ENCODE measurements at regions of chr1 and their contacts with region 1.

Region 1: DNA sequence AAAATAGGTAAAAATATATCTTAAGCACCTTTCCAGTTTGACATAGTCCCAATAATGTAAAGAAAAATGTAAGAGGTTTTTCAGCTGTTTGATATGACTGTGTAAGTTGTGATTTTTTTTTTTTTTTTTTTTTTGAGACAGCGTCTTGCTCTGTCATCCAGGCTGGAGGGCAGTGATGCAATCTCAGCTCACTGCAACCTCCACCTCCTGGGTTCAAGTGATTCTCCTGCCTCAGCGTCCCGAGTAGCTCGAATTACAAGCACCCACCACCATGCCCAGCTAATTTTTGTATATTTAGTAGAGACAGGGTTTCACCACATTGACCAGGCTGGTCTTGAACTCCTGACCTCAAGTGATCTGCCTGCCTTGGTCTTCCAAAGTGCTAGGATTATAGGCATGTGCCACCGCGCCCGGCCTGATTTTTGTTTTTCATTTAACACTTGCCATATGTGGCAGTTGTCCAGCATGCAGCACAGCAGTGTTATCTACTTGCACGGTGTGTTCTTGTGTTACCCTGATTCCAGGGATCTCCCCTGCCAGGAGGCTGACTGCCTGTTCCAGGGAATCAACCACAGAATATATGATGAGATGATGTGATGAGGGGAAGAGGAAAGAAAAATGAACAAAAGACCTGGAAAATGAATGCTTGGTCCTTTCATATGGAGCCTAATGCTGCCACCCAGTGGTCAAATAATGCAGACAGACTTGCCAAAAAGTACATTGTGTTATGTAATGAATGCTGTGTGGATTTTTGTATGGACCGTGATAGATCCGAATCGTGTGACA is 79.0 kb downstream of the RAVER2 start:
- DNase-seq: peak; percentile 47 to 60
- H3K4me3 ChIP-seq: no peak overlapping the region
- H3K27ac ChIP-seq: no peak overlapping the region
- H3K4me1 ChIP-seq: no peaks in the 10 kb centered on the region
- H3K27me3 ChIP-seq: no peaks in the 10 kb centered on the region
- CTCF ChIP-seq: peak; percentile 91

Region 2: GRCh38 chr1:63615768-63616420 is 1208.0 kb before region 1 on chr1:
- CTCF ChIA-PET with region 1: no interaction called
- POLR2A ChIA-PET with region 1: no interaction called
- intact Hi-C with region 1: loop called (anchors 5 kb)
- DNase-seq: peak; percentile 61 to 63
- H3K4me3 ChIP-seq: no peak overlapping the region
- H3K27ac ChIP-seq: no peak overlapping the region
- H3K4me1 ChIP-seq: peaks cover 38% of the 10 kb centered on the region
- H3K27me3 ChIP-seq: no peaks in the 10 kb centered on the region
- CTCF ChIP-seq: peak; percentile 91

Region 3: DNA sequence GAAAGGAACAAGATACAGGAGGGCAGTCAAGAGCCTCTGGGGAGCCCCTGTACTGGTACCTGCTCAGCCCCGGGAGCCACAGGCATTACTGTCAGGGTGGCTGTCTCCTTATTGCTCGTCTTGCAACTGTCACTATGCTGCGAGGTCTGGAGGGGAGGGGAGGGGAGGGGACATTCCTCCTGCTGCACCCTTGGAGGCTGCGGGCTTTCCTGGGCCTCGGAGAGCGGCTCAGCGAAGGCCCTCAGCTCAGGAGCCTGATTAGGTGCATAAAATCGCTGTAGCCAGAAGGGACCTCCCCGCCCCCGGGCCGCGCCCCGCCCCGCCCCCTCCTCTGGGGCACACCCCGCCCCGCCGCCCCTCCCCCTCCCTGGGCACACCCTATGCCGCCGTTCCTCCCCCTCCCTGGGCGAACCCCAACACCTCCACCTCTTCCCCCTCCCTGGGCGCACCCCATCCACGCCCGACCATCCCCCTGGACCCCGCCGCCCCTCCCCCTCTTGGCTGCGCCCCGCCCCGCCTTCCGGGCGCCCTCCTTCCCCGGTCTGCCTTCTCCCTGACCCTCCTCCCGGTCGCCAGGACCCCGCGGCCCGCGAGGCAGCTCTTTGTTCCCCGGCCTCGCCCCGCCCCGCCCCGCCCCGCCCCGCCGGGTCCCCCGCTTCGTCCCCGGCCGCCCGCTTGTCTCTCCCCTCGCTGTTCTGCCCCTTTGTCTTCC is 318.5 kb before region 1 on chr1:
- CTCF ChIA-PET with region 1: interaction called, 3 read pairs
- POLR2A ChIA-PET with region 1: no interaction called
- intact Hi-C with region 1: loop called (anchors 5 kb)
- DNase-seq: peak in 1 of 2 experiments; percentile 58
- H3K4me3 ChIP-seq: peak overlapping the region; percentile 58
- H3K27ac ChIP-seq: no peak overlapping the region
- H3K4me1 ChIP-seq: peaks cover 14% of the 10 kb centered on the region
- H3K27me3 ChIP-seq: no peaks in the 10 kb centered on the region
- CTCF ChIP-seq: no peak

Region 4: GRCh38 chr1:64686828-64687724 is 136.8 kb before region 1 on chr1:
- CTCF ChIA-PET with region 1: no interaction called
- POLR2A ChIA-PET with region 1: no interaction called
- intact Hi-C with region 1: loop called (anchors 1 kb)
- DNase-seq: peak; percentile 31 to 43
- H3K4me3 ChIP-seq: no peak overlapping the region
- H3K27ac ChIP-seq: no peak overlapping the region
- H3K4me1 ChIP-seq: no peaks in the 10 kb centered on the region; the same call in 1 of the 2 replicates
- H3K27me3 ChIP-seq: no peaks in the 10 kb centered on the region
- CTCF ChIP-seq: peak; percentile 88

Region 5: GRCh38 chr1:64755361-64755760 is 68.5 kb before region 1 on chr1:
- CTCF ChIA-PET with region 1: no interaction called
- POLR2A ChIA-PET with region 1: no interaction called
- intact Hi-C with region 1: no loop called
- DNase-seq: no peak
- H3K4me3 ChIP-seq: no peak overlapping the region
- H3K27ac ChIP-seq: no peak overlapping the region
- H3K4me1 ChIP-seq: no peaks in the 10 kb centered on the region
- H3K27me3 ChIP-seq: no peaks in the 10 kb centered on the region
- CTCF ChIP-seq: no peak

Region 6: DNA sequence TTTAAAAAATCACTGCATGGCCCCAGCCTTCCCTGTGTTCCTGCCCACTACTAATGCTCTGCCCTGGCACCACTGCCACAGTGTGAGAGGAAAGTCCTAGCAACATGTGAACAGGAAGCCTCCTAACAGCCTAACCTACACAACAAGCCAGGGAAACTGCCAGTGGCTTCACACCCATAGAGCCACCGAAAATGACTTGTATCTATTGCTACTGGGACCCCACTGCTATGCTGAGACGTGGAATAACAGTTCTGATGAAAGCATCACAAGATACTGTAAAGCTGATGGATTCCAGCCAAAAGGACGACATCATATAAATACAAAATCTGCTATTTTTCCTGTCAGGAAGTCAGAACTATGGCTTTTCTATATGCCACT is 67.6 kb after region 1 on chr1:
- CTCF ChIA-PET with region 1: no interaction called
- POLR2A ChIA-PET with region 1: no interaction called
- intact Hi-C with region 1: no loop called
- DNase-seq: no peak
- H3K4me3 ChIP-seq: no peak overlapping the region
- H3K27ac ChIP-seq: no peak overlapping the region
- H3K4me1 ChIP-seq: peaks cover 4% of the 10 kb centered on the region
- H3K27me3 ChIP-seq: no peaks in the 10 kb centered on the region
- CTCF ChIP-seq: no peak

Region 7: GRCh38 chr1:64906447-64906846 is 82.6 kb after region 1 on chr1:
- CTCF ChIA-PET with region 1: interaction called, 13 read pairs
- POLR2A ChIA-PET with region 1: no interaction called
- intact Hi-C with region 1: no loop called
- DNase-seq: peak in 1 of 2 experiments; percentile 46
- H3K4me3 ChIP-seq: no peak overlapping the region
- H3K27ac ChIP-seq: 0 out of 2 replicates have a peak overlapping the region, but pooled peaks have one; percentile 10
- H3K4me1 ChIP-seq: peaks cover 26% of the 10 kb centered on the region
- H3K27me3 ChIP-seq: no peaks in the 10 kb centered on the region
- CTCF ChIP-seq: no peak

Measured in PC-9 (cell line).